Activated naive CD4-positive, alpha-beta T cell treated with anti-CD3 and anti-CD28 coated beads for 36 hours (primary cell): ENCODE measurements at regions of chrX and their contacts with region 1.

Region 1: GRCh38 chrX:17535229-17535628 is 160.2 kb downstream of the NHS start:
- DNase-seq: peak; percentile 73
- H3K4me3 Mint-ChIP-seq: no peak overlapping the region
- H3K27ac Mint-ChIP-seq: peak overlapping the region; percentile 18
- H3K4me1 Mint-ChIP-seq: peaks cover 28% of the 10 kb centered on the region
- H3K27me3 Mint-ChIP-seq: no peaks in the 10 kb centered on the region

Region 2: GRCh38 chrX:17242470-17242869 is 292.8 kb before region 1 on chrX:
- CTCF ChIA-PET with region 1: no interaction called
- intact Hi-C with region 1: loop called (anchors 10 kb)
- DNase-seq: peak; percentile 59
- H3K4me3 Mint-ChIP-seq: no peak overlapping the region
- H3K27ac Mint-ChIP-seq: no peak overlapping the region
- H3K4me1 Mint-ChIP-seq: no peaks in the 10 kb centered on the region
- H3K27me3 Mint-ChIP-seq: no peaks in the 10 kb centered on the region

Region 3: GRCh38 chrX:17519358-17519757 is 15.9 kb before region 1 on chrX:
- CTCF ChIA-PET with region 1: no interaction called
- intact Hi-C with region 1: no loop called
- DNase-seq: no peak
- H3K4me3 Mint-ChIP-seq: no peak overlapping the region
- H3K27ac Mint-ChIP-seq: no peak overlapping the region
- H3K4me1 Mint-ChIP-seq: no peaks in the 10 kb centered on the region
- H3K27me3 Mint-ChIP-seq: no peaks in the 10 kb centered on the region

Region 4: GRCh38 chrX:17553469-17553868 is 18.2 kb after region 1 on chrX:
- CTCF ChIA-PET with region 1: interaction called, 3 read pairs
- intact Hi-C with region 1: loop called (anchors 2 kb)
- DNase-seq: no peak
- H3K4me3 Mint-ChIP-seq: no peak overlapping the region
- H3K27ac Mint-ChIP-seq: peak overlapping the region; percentile 19
- H3K4me1 Mint-ChIP-seq: peaks cover 22% of the 10 kb centered on the region
- H3K27me3 Mint-ChIP-seq: no peaks in the 10 kb centered on the region

Region 5: GRCh38 chrX:17590892-17591740 is 55.9 kb after region 1 on chrX:
- CTCF ChIA-PET with region 1: interaction called, 12 read pairs
- intact Hi-C with region 1: loop called (anchors 1 kb)
- DNase-seq: peak; percentile 70
- H3K4me3 Mint-ChIP-seq: no peak overlapping the region
- H3K27ac Mint-ChIP-seq: peak overlapping the region; percentile 82
- H3K4me1 Mint-ChIP-seq: peaks cover 44% of the 10 kb centered on the region
- H3K27me3 Mint-ChIP-seq: peaks cover 2% of the 10 kb centered on the region

Region 6: DNA sequence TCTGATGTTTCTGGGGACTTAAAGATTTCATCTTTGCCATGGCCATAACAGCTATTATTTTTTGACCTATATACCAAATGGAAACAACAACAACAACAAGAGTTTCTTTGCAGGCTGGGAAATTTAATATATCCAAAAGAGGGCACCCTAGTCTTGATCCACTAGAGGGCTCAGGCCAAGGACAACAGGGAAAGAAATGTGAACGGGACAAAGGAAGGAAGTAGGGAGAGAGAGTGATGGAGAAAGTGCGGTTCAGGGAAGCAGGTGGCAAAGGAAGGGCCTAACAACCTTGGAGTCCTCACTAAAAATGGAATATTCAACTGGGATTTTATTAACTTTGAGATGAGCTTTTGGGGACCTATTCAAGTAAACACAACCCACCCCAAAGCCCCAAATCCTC is 134.2 kb after region 1 on chrX:
- CTCF ChIA-PET with region 1: no interaction called
- intact Hi-C with region 1: loop called (anchors 5 kb)
- DNase-seq: no peak
- H3K4me3 Mint-ChIP-seq: no peak overlapping the region
- H3K27ac Mint-ChIP-seq: peak overlapping the region; percentile 87
- H3K4me1 Mint-ChIP-seq: peaks cover 24% of the 10 kb centered on the region
- H3K27me3 Mint-ChIP-seq: no peaks in the 10 kb centered on the region

Region 7: DNA sequence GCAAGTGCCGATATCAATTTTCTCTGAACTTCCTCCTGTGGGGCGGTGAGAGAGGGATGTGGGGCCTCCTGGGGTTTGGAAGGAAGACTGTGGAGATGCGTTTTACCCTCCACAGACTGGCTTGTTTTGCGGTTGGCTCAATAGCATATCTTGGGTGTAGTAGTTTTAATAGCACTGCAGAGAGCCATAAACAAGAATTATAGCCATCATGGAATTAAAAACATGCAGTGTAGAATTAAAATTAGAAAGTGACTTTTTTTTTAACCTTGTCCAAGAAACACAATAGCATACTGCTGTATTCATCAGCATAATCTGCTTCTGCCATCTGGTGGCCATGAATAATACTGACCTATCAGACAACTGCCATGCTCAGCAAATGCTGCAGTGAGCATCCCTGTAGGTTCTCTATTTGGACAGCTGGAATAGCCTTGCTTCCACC is 154.8 kb after region 1 on chrX:
- CTCF ChIA-PET with region 1: interaction called, 4 read pairs
- intact Hi-C with region 1: loop called (anchors 1 kb)
- DNase-seq: peak; percentile 69
- H3K4me3 Mint-ChIP-seq: no peak overlapping the region
- H3K27ac Mint-ChIP-seq: no peak overlapping the region
- H3K4me1 Mint-ChIP-seq: peaks cover 6% of the 10 kb centered on the region
- H3K27me3 Mint-ChIP-seq: no peaks in the 10 kb centered on the region